Transverse colon (tissue), 4 donors: ENCODE measurements at regions of chrX and their contacts with region 1.

Region 1: DNA sequence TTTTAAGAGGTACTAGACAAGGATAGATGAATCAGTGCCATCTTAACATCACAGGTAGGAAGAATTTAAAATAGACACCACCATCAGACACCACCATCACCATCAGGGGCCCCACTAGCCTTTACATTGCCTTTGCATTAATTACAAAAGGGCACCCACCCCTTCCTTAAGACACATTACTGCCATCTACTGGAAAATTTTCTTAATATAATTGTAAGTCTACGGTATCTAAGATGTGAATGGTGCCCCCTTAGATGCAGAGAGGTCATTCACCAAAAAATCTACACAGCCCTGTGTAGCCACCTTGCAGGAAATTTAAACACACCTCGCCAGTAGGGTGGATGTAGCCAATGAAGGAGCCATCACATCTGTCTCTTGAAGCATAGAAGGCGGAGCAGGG is 184.1 kb downstream of the MID1IP1 start:
- DNase-seq: no peak
- H3K4me3 ChIP-seq: no peak overlapping the region
- H3K27ac ChIP-seq: no peak overlapping the region
- H3K4me1 ChIP-seq: peaks cover 0 to 5% (median 0%) of the 10 kb centered on the region in 4 donors
- H3K27me3 ChIP-seq: no peaks in the 10 kb centered on the region
- CTCF ChIP-seq: peak in 1 of 5 experiments; percentile 11
- EP300 ChIP-seq: no peak
- POLR2A ChIP-seq: no peak

Region 2: GRCh38 chrX:38754102-38754790 is 231.1 kb before region 1 on chrX:
- in situ Hi-C with region 1: loop called in 2 of 4 experiments (anchors 25 kb)
- intact Hi-C with region 1: no loop called
- DNase-seq: no peak
- H3K4me3 ChIP-seq: no peak overlapping the region
- H3K27ac ChIP-seq: no peak overlapping the region
- H3K4me1 ChIP-seq: no peaks in the 10 kb centered on the region
- H3K27me3 ChIP-seq: no peaks in the 10 kb centered on the region
- CTCF ChIP-seq: peak; percentile 54 to 67 (median 58)
- EP300 ChIP-seq: no peak
- POLR2A ChIP-seq: no peak